GM12878 (cell line): ENCODE measurements at regions of chr3 and their contacts with region 1.

Region 1: DNA sequence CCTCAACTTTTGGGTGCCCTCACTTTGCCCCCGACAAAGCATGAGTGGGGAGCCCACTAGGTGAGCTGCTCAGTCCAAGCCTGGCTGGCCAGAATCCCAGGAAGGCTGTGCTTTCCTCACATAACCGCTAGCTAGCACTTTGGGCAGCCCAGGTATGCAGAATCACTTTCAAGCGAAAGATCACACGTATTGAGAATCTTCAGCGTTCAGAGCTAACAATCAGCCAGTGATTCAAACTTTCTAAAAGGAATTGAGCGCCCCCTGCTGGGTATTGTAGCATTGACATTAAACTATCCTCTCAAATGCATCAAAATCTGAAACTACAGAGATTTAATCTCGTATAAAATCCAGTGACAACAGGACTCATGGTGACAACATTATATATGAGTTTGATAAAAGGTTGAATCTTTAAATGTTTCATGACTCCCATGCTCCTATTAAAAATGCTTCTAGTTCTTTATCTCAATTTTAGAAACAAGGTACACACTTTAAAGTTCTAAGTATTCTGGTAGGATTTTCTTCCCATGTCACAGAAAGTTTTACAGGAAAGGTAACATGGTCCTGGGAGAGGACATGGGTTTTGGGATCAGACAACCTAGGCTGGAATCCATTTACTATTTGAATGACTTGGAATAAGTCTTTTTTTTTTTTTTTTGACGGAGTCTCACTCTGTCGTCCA is 11.8 kb downstream of the ANAPC13 start:
- DNase-seq: no peak
- ATAC-seq: peak; percentile 88
- H3K4me3 ChIP-seq: no peak overlapping the region
- H3K27ac ChIP-seq: no peak overlapping the region
- H3K4me1 ChIP-seq: no peaks in the 10 kb centered on the region
- H3K27me3 ChIP-seq: no peaks in the 10 kb centered on the region
- CTCF ChIP-seq: peak; percentile 53 to 76 (median 65)
- EP300 ChIP-seq: no peak
- POLR2A ChIP-seq: no peak
- RAD21 ChIP-seq: peak; percentile 76

Region 2: GRCh38 chr3:133661454-133662277 is 812.3 kb before region 1 on chr3 and contains the start of gene TOPBP1:
- CTCF ChIA-PET with region 1: no interaction called
- POLR2A ChIA-PET with region 1: interaction called, 3 read pairs
- RAD21 ChIA-PET with region 1: no interaction called
- SMC1A ChIA-PET with region 1: no interaction called
- in situ Hi-C with region 1: no loop called
- intact Hi-C with region 1: loop called (anchors 10 kb)
- DNase-seq: no peak
- ATAC-seq: peak; percentile 86
- H3K4me3 ChIP-seq: peak within 1 kb of the TSS; percentile 95
- H3K27ac ChIP-seq: peak within 1 kb of the TSS; percentile 96
- H3K4me1 ChIP-seq: peaks cover 4% of the 10 kb centered on the region; the same call in 1 of the 2 replicates
- H3K27me3 ChIP-seq: no peaks in the 10 kb centered on the region
- CTCF ChIP-seq: no peak
- EP300 ChIP-seq: no peak
- POLR2A ChIP-seq: peak; percentile 92
- RAD21 ChIP-seq: no peak
- polyA plus RNA-seq, gene TOPBP1: 18.3 to 19.9 TPM

Region 3: DNA sequence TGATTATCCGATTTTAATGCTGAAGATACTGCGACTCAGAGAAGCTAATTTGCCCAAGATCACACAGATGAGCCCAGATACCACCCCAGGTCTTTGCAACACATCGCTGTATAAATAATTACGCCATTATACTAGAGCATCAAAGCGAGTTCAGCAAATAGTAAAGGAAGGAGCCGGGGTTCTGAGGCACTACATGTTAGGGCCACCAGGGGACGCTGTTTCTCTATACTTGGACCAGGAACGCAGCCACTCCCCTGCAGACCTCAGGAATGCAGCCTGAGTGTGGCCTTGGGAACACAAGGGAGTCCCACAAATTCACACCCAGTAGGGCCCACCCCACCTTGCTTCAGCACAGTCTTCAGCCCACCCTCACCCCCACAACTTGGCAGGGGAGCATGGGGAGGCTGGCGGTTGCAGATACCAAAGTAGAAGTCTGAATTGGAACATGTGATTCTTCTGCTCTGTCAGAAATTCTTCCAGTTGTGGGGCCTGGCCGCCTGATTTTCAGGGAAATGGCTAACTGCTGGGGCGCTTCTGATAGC is 165.6 kb before region 1 on chr3:
- CTCF ChIA-PET with region 1: interaction called, 83 read pairs
- POLR2A ChIA-PET with region 1: no interaction called
- RAD21 ChIA-PET with region 1: interaction called, 17 read pairs
- SMC1A ChIA-PET with region 1: interaction called, 26 read pairs
- in situ Hi-C with region 1: loop called (anchors 5 kb)
- intact Hi-C with region 1: loop called (anchors 1 kb)
- DNase-seq: peak; percentile 8
- ATAC-seq: peak; percentile 95
- H3K4me3 ChIP-seq: no peak overlapping the region
- H3K27ac ChIP-seq: no peak overlapping the region
- H3K4me1 ChIP-seq: no peaks in the 10 kb centered on the region
- H3K27me3 ChIP-seq: peaks cover 4 to 7% of the 10 kb centered on the region in 2 experiments
- CTCF ChIP-seq: peak; percentile 96 to 99 (median 99)
- EP300 ChIP-seq: no peak
- POLR2A ChIP-seq: no peak
- RAD21 ChIP-seq: peak; percentile 93

Region 4: GRCh38 chr3:134357261-134358184 is 116.5 kb before region 1 on chr3:
- CTCF ChIA-PET with region 1: interaction called, 9 read pairs
- POLR2A ChIA-PET with region 1: no interaction called
- RAD21 ChIA-PET with region 1: no interaction called
- SMC1A ChIA-PET with region 1: no interaction called
- in situ Hi-C with region 1: no loop called
- intact Hi-C with region 1: loop called (anchors 2 kb)
- DNase-seq: no peak
- ATAC-seq: no peak
- H3K4me3 ChIP-seq: no peak overlapping the region
- H3K27ac ChIP-seq: no peak overlapping the region
- H3K4me1 ChIP-seq: no peaks in the 10 kb centered on the region
- H3K27me3 ChIP-seq: peaks cover 0 to 2% of the 10 kb centered on the region in 2 experiments; a peak in 3 of 4 replicates
- CTCF ChIP-seq: no peak
- EP300 ChIP-seq: no peak
- POLR2A ChIP-seq: no peak
- RAD21 ChIP-seq: no peak